ENCODE measurements at regions of chr12 and their contacts with region 1.

Region 1: GRCh38 chr12:123905319-123905925 is 67.2 kb downstream of the CCDC92 start:
- DNase-seq: peak; percentile 68
- ATAC-seq: peak; percentile 54

Region 2: DNA sequence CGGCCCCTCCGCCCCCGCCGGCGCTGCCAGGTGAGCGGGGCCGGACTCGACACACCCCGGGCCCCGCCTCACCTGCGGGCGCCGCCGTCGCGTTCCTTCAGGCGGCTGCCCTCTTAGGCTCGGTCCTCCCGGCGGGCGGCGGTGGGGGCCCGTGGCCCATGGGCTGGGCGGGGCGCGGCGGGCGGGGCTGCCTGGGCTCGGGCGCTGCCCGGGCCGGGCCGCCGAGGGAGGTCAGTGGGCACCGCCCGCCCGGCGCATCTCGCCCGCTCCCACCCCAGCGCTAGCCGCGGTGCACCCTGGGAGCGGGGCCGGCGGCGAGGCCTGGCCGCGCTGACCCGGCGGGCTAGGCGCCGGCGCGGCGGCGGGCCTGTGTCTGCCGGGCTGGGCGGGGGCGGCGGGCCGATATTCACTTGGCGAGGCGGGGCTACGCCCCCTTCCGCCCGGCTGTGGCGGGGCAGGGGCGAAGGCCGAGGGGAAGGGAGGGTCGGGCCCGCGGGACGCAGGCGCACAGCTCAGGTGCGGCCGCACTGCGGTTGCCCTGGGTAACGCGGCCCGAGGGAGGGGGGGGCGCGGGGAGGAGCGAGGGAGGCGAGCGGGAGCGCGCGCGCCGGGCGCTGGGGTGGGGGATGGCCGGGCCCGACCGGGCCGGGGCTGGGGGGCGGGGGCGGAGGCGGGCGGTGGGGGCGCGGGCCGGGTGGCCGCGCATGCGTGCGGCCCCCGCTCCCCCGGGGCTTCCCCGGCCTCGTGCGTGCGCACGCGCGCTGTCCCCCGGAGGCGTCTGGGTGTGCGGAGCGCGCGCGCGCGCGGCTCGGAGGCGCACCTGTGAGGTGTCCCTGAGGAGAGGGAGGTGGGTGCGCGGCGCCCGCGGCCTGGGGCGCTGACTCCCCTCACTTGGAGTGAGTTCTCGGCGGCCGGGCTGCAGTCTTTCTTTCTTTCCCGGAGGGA is 67.3 kb after region 1 on chr12 and contains the starts of genes CCDC92 and ZNF664:
- intact Hi-C with region 1: loop called (anchors 10 kb)
- DNase-seq: peak; percentile 94
- ATAC-seq: peak; percentile 95
- total RNA-seq, gene CCDC92: 49.2 TPM
- total RNA-seq, gene ZNF664: 74.6 TPM

Region 3: GRCh38 chr12:124625867-124626675 is 720.6 kb after region 1 on chr12:
- intact Hi-C with region 1: no loop called
- DNase-seq: peak; percentile 91
- ATAC-seq: peak; percentile 92